Activated B cell treated with CpG ODN at 0.5 μM for 24 hours (primary cell): ENCODE measurements at regions of chr21 and their contacts with region 1.

Region 1: DNA sequence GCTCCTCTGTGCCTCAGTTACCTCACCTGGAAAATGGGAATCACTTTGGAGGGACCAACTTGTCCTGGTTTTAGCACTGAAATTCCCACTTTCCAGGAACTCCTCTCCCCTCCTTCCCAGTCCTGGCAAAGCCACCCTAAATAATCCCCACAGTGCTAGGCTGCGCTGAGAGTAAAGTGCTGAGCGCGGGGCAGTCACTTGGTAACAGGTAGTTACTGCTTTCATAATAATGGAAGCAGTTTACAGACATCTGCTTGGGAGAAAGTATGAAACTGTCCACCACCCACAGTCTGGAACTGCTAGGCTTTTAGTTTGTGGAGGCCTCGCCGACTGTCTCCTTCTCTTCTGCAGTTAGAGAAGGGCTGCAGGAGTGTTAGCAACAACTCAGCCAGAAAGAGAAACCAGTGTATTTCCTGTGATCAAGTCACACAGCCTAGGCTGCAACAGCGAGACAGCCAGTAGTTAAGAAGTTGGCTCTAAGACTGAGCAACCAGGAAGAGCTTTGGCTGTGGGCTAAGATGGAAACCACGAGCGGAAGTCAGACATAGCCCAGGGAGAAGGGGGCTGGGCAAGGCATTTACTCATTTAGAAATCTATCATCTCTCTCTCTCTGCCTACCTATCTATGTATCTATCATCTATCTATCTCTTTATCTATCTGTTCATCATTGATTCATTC is 30.8 kb upstream of the ABCG1 start:
- DNase-seq: peak; percentile 40
- ATAC-seq: peak; percentile 98
- H3K4me3 Mint-ChIP-seq: peak overlapping the region; percentile 72
- H3K27ac Mint-ChIP-seq: peak overlapping the region; percentile 93
- H3K4me1 Mint-ChIP-seq: peaks cover 46% of the 10 kb centered on the region
- H3K27me3 Mint-ChIP-seq: no peaks in the 10 kb centered on the region
- CTCF ChIP-seq: no peak

Region 2: GRCh38 chr21:42037943-42038342 is 150.2 kb before region 1 on chr21:
- CTCF ChIA-PET with region 1: no interaction called
- POLR2A ChIA-PET with region 1: no interaction called
- intact Hi-C with region 1: no loop called
- DNase-seq: no peak
- ATAC-seq: no peak
- H3K4me3 Mint-ChIP-seq: no peak overlapping the region
- H3K27ac Mint-ChIP-seq: no peak overlapping the region
- H3K4me1 Mint-ChIP-seq: peaks cover 5% of the 10 kb centered on the region
- H3K27me3 Mint-ChIP-seq: no peaks in the 10 kb centered on the region
- CTCF ChIP-seq: no peak

Region 3: DNA sequence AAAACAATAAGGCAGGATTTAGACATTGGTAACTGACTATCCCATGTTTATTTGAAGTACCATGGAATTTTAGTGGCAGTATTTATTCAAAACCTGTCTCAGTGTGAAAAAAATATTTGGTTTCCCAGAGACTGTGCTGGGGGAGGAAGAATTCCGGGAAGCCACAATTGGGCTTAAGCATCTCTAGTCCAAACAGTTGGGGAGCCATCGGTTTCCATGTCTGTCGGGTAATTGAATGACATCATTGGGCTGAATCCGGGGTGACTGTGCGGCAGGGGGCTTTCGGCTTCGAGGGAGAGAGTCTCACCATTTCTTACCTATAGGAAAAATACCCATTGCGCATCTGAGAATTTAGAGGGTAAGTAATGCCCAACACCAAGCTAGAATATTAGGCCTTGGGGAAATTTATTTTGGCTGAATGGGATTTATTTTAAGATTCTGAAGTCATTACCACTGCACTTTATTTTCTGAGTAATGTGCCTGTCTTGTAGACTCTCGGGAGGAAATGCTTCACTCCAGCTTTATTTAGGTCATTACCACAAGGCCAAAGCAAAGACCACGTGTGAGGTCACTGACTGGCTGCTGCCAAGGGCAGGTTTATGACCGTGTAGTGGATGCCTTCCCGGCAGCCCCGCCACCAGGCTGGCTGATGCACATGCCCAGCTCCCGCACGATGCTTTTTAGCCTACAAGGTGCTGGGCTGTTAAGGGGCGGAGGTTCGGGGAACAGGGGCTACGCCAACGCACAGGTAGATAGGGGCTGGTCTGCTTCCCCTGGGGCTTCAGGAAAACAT is 140.1 kb before region 1 on chr21:
- CTCF ChIA-PET with region 1: no interaction called
- POLR2A ChIA-PET with region 1: no interaction called
- intact Hi-C with region 1: no loop called
- DNase-seq: no peak
- ATAC-seq: no peak
- H3K4me3 Mint-ChIP-seq: no peak overlapping the region
- H3K27ac Mint-ChIP-seq: no peak overlapping the region
- H3K4me1 Mint-ChIP-seq: peaks cover 2% of the 10 kb centered on the region
- H3K27me3 Mint-ChIP-seq: no peaks in the 10 kb centered on the region
- CTCF ChIP-seq: no peak

Region 4: DNA sequence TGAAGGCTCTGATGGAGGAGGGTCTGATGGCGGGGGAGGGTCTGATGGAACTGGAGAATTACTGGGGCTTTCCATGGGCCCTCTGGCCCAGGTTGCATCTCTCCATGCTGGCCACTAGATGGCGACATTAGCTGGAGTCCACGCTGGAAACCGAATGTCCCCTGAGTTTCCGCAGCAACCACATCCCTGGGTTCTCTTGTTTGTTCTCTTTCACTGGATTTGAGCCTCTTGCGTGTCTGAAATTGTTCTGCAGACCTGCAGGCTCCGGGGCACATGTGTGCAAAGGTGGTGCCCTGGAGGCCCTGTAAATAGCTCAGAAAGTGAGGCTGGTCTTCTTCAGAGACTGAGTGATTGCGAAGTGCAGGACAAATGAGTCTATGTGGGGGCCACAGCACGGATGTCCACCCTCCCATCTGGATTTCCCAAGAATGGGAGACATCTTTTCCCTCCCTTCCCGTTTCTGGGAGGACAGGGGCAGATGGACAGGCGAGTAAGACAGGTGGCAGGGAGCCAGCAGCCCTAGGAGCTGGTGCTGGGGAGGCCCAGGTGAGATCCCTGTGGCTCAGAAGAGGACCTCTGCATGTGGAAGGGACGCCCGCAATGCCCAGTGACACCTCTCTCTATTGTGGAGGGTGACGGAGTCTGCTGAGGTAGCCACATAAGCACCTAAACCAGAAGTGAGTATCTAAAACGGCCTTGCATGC is 42.4 kb before region 1 on chr21:
- CTCF ChIA-PET with region 1: interaction called, 3 read pairs
- POLR2A ChIA-PET with region 1: no interaction called
- intact Hi-C with region 1: loop called (anchors 5 kb)
- DNase-seq: peak; percentile 36
- ATAC-seq: peak; percentile 86
- H3K4me3 Mint-ChIP-seq: no peak overlapping the region
- H3K27ac Mint-ChIP-seq: no peak overlapping the region
- H3K4me1 Mint-ChIP-seq: peaks cover 7% of the 10 kb centered on the region
- H3K27me3 Mint-ChIP-seq: no peaks in the 10 kb centered on the region
- CTCF ChIP-seq: no peak

Region 5: GRCh38 chr21:42199488-42200458 is 11.7 kb after region 1 on chr21:
- CTCF ChIA-PET with region 1: no interaction called
- POLR2A ChIA-PET with region 1: interaction called, 9 read pairs
- intact Hi-C with region 1: loop called (anchors 1 kb)
- DNase-seq: no peak
- ATAC-seq: peak; percentile 84
- H3K4me3 Mint-ChIP-seq: peak overlapping the region; percentile 46
- H3K27ac Mint-ChIP-seq: no peak overlapping the region
- H3K4me1 Mint-ChIP-seq: peaks cover 26% of the 10 kb centered on the region
- H3K27me3 Mint-ChIP-seq: no peaks in the 10 kb centered on the region
- CTCF ChIP-seq: no peak

Region 6: DNA sequence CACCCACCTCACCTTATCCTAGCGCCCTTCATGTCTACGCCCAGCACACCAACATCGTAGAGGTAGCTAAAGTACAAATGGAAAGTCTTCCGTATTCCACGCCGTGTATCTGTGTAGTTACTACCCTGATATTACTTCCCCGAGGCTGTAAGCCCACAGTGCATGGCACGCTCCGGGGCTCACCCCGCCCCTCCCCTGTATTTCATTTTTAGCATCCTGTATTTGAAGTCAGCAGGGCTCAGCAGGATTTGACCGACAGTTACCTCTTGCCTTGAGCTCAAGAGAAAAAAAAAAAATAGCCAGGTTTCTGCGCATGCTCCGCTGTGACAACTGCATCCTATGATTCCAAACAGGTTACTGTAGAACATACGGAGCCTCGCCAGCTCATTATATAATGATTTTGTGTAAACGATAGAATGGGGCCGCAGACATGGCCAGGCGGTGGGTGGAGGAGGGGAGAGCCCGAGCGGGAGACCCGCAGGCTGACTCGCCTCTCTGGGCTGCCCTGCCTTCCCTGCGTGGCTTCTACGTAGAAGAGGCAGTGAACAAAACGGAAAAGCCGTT is 32.1 kb after region 1 on chr21:
- CTCF ChIA-PET with region 1: no interaction called
- POLR2A ChIA-PET with region 1: interaction called, 11 read pairs
- intact Hi-C with region 1: no loop called
- DNase-seq: peak; percentile 50
- ATAC-seq: peak; percentile 84
- H3K4me3 Mint-ChIP-seq: peak overlapping the region; percentile 87
- H3K27ac Mint-ChIP-seq: peak overlapping the region; percentile 73
- H3K4me1 Mint-ChIP-seq: peaks cover 39% of the 10 kb centered on the region
- H3K27me3 Mint-ChIP-seq: no peaks in the 10 kb centered on the region
- CTCF ChIP-seq: no peak

Region 7: DNA sequence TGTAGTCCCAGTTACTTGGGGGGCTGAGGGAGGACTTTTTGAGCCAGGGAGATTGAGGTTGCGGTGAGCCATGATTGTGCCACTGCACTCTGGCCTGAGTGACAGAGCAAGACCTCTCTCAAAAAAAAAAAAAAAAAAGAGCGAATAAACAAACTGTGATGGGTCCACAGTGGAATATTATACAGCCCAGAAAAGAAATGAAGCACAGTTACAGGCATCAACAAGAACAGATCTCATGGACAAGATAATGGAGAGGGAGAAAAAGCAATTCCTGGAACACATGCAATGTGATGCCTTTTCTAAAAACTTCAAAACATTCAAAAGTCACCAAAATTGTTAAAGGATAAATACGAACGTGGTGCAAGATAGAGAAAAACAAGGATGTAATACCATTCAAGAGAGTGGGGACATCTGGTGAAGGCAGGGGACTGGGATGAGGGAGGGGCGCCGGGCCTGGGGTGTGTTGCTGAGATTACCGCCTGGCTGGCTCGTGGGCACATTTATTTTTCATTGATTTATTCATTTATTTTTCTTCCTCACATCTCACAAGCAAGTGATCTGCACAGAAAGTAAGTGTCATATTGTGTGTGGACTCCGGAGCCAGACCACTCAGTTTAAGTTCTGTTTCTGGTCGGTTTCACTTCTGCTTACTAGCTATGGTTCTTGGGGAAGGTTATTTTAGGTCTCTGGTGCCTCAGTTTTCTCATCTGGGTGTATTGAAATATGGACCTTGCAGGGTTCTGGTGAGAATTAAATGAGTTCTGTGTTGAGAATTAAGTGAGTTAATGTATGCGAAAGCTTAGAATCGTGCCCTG is 60.9 kb after region 1 on chr21:
- CTCF ChIA-PET with region 1: no interaction called
- POLR2A ChIA-PET with region 1: no interaction called
- intact Hi-C with region 1: loop called (anchors 1 kb)
- DNase-seq: no peak
- ATAC-seq: peak; percentile 92
- H3K4me3 Mint-ChIP-seq: peak overlapping the region; percentile 3
- H3K27ac Mint-ChIP-seq: peak overlapping the region; percentile 65
- H3K4me1 Mint-ChIP-seq: peaks cover 61% of the 10 kb centered on the region
- H3K27me3 Mint-ChIP-seq: no peaks in the 10 kb centered on the region
- CTCF ChIP-seq: no peak